Activated naive CD4-positive, alpha-beta T cell treated with anti-CD3 and anti-CD28 coated beads for 36 hours (primary cell): ENCODE measurements at regions of chr3 and their contacts with region 1.

Region 1: GRCh38 chr3:31531992-31532586 is 636 bp upstream of the STT3B start:
- DNase-seq: peak; percentile 99
- H3K4me3 Mint-ChIP-seq: peak overlapping the region; percentile 95
- H3K27ac Mint-ChIP-seq: peak overlapping the region; percentile 99
- H3K4me1 Mint-ChIP-seq: peaks cover 13% of the 10 kb centered on the region
- H3K27me3 Mint-ChIP-seq: no peaks in the 10 kb centered on the region

Region 2: GRCh38 chr3:30658328-30659052 is 873.6 kb before region 1 on chr3:
- CTCF ChIA-PET with region 1: no interaction called
- intact Hi-C with region 1: loop called (anchors 5 kb)
- DNase-seq: peak; percentile 62
- H3K4me3 Mint-ChIP-seq: peak overlapping the region; percentile 62
- H3K27ac Mint-ChIP-seq: peak overlapping the region; percentile 97
- H3K4me1 Mint-ChIP-seq: peaks cover 98% of the 10 kb centered on the region
- H3K27me3 Mint-ChIP-seq: no peaks in the 10 kb centered on the region

Region 3: GRCh38 chr3:31227131-31227562 is 304.9 kb before region 1 on chr3:
- CTCF ChIA-PET with region 1: no interaction called
- intact Hi-C with region 1: loop called (anchors 5 kb)
- DNase-seq: no peak
- H3K4me3 Mint-ChIP-seq: no peak overlapping the region
- H3K27ac Mint-ChIP-seq: peak overlapping the region; percentile 64
- H3K4me1 Mint-ChIP-seq: peaks cover 87% of the 10 kb centered on the region
- H3K27me3 Mint-ChIP-seq: no peaks in the 10 kb centered on the region

Region 4: GRCh38 chr3:31472479-31473390 is 59.4 kb before region 1 on chr3:
- CTCF ChIA-PET with region 1: interaction called, 6 read pairs
- intact Hi-C with region 1: loop called (anchors 1 kb)
- DNase-seq: peak; percentile 62
- H3K4me3 Mint-ChIP-seq: no peak overlapping the region
- H3K27ac Mint-ChIP-seq: no peak overlapping the region
- H3K4me1 Mint-ChIP-seq: peaks cover 21% of the 10 kb centered on the region
- H3K27me3 Mint-ChIP-seq: no peaks in the 10 kb centered on the region

Region 5: GRCh38 chr3:31960793-31961431 is 428.8 kb after region 1 on chr3:
- CTCF ChIA-PET with region 1: no interaction called
- intact Hi-C with region 1: no loop called
- DNase-seq: no peak
- H3K4me3 Mint-ChIP-seq: no peak overlapping the region
- H3K27ac Mint-ChIP-seq: no peak overlapping the region
- H3K4me1 Mint-ChIP-seq: peaks cover 12% of the 10 kb centered on the region
- H3K27me3 Mint-ChIP-seq: peaks cover 6% of the 10 kb centered on the region

Region 6: DNA sequence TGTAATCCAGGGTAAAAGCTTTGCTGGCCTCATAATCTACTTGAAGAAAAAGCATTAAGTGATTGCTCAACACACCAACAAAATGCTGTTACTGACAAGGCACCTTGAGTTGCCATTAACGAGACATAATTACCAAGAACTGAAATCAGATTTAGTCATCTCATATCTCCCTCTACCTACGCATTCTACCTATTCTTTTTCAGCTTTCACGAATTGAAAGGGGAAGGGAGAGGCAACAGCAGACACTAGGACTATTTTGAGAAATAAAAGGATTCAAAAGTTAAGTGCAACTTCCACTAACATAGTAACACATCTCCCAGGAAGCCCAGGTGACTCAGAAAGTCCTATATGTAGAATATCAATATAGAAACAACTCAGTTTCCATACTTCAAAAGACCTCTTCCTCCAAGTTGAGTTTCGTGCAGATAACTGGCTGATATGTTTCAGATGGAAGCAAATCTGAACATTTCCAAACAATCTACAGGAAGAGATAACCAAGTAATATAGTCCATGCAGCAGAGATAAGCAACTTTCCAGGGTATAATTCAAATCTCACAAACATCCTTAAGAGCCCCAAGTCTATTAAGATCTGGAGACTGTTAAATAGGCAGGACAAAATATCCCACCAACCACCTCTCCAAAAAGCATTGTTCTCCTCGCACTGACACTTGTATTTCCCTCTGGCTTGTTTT is 447.1 kb after region 1 on chr3:
- CTCF ChIA-PET with region 1: no interaction called
- intact Hi-C with region 1: loop called (anchors 5 kb)
- DNase-seq: peak; percentile 37
- H3K4me3 Mint-ChIP-seq: peak overlapping the region; percentile 78
- H3K27ac Mint-ChIP-seq: peak overlapping the region; percentile 43
- H3K4me1 Mint-ChIP-seq: peaks cover 26% of the 10 kb centered on the region
- H3K27me3 Mint-ChIP-seq: peaks cover 49% of the 10 kb centered on the region

Region 7: GRCh38 chr3:32018757-32019564 is 486.9 kb after region 1 on chr3:
- CTCF ChIA-PET with region 1: no interaction called
- intact Hi-C with region 1: no loop called
- DNase-seq: no peak
- H3K4me3 Mint-ChIP-seq: no peak overlapping the region
- H3K27ac Mint-ChIP-seq: no peak overlapping the region
- H3K4me1 Mint-ChIP-seq: no peaks in the 10 kb centered on the region
- H3K27me3 Mint-ChIP-seq: peaks cover 2% of the 10 kb centered on the region

Region 8: GRCh38 chr3:33063651-33064051 is 1531.6 kb after region 1 on chr3:
- CTCF ChIA-PET with region 1: no interaction called
- intact Hi-C with region 1: loop called (anchors 5 kb)
- DNase-seq: peak; percentile 86
- H3K4me3 Mint-ChIP-seq: no peak overlapping the region
- H3K27ac Mint-ChIP-seq: peak overlapping the region; percentile 93
- H3K4me1 Mint-ChIP-seq: peaks cover 57% of the 10 kb centered on the region
- H3K27me3 Mint-ChIP-seq: no peaks in the 10 kb centered on the region